ENCODE measurements at regions of chr13 and their contacts with region 1.

Region 1: GRCh38 chr13:79393564-79394249 is 12.3 kb downstream of the RBM26 start:
- DNase-seq: peak in 9 of 10 donors; percentile 35 to 83 (median 58)
- ATAC-seq: peak; percentile 78 to 83
- H3K4me3 Mint-ChIP-seq: peak overlapping the region; percentile 78 to 96 (median 85)
- H3K27ac Mint-ChIP-seq: peak overlapping the region; percentile 68 to 96 (median 90)
- H3K4me1 Mint-ChIP-seq: peaks cover 38 to 71% (median 63%) of the 10 kb centered on the region in 4 donors
- H3K27me3 Mint-ChIP-seq: no peaks in the 10 kb centered on the region

Region 2: DNA sequence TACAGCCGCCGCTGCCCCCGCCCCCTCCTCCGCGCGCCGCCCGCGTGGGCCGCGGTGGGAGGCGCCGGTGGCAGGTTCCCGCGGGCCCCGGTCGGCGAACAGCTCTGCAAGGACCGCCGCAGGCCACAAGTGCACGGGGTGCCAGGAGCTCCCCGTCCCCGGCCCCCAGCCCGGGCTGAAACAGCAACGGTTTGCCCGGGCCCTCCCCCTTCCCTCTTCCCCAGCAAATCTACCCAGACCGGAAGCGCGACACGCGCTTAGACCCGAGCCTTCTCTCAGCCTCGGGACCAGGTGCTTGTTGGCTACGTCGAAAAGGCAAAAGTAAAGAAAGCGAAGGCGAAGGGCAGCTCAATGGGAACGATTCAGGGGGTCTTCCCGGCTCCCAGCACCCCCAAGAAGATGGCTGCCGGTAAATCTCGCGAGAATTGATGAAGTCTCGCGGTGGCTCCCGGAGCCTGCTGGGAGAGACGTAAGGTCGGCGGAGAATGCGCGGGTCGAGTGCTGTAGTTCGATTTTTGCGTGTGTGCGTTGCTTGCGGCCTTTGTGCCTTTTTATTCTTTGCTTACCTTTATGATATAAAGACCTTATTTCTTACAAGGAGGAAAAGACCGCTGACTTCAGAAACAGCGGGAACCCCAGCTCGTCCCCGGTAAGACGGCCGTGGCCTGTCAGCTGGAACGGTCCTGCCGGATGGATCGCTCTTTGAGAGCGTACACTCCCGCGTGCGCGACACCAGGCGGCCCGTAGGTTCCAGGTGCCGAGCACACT is 12.3 kb after region 1 on chr13 and contains the start of gene RBM26:
- POLR2A ChIA-PET with region 1: interaction called, 107 read pairs
- DNase-seq: peak; percentile 85 to 98 (median 95)
- ATAC-seq: peak; percentile 88
- H3K4me3 Mint-ChIP-seq: peak within 1 kb of the TSS in 9 of 10 donors; percentile 91 to 97 (median 94)
- H3K27ac Mint-ChIP-seq: peak within 1 kb of the TSS in 8 of 10 donors; percentile 97 to 99 (median 98)
- H3K4me1 Mint-ChIP-seq: peaks cover 25 to 35% (median 31%) of the 10 kb centered on the region in 4 donors
- H3K27me3 Mint-ChIP-seq: no peaks in the 10 kb centered on the region
- polyA plus RNA-seq, gene RBM26: 14.1 to 17.0 (median 16.1) TPM

Measured in naive thymus-derived CD8-positive, alpha-beta T cell (primary cell).